Lower leg skin (tissue), 4 donors: ENCODE measurements at regions of chr20 and their contacts with region 1.

Region 1: DNA sequence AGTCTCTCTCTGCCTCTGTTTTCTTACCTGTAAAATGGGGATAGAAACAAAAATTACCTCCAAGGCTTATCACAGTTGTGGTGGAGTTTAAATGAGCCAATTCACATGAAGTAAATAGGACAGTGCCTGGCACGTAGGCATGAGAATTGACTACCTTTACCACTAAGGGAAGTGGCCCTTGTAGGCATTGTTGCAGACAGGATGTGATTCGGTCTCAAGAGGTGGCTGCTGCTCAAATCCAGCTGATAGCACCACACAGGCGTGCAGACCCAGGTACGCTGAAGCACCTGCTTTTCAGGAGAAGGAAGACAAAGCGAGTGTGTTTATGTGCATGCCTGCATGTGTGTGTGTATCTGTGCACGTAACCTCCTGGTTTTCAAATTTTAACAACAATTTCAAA is 108.6 kb downstream of the EYA2 start:
- DNase-seq: no peak
- H3K4me3 ChIP-seq: no peak overlapping the region
- CTCF ChIP-seq: no peak
- POLR2A ChIP-seq: no peak

Region 2: DNA sequence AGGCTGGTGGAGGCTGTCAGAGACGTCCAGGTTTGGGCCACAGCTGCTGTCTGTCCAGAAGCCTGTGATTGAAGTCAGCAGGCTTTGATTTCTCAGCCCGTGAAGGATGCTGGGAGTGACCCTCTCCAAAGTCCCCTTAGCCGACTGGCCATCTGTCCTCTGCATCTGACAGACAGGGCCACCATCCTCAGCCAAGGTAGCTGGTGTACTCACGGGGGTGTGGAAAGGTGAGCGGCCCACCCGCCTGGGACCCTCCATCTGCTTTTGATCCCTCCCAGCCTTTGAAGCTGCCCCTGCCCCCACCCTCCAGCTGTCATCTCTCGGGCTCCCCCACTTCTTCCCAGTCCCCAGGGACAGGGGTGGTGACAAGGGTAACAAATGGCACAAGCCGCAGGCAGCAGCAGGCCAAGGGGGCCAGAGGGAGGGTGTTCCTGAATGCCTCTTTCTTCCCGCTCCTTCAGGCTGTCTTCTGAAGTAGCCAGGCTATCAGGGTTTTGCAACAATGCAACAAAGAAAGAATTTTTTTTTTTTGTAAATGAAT is 24.2 kb before region 1 on chr20:
- intact Hi-C with region 1: loop called (anchors 1 kb)
- DNase-seq: peak in 1 of 2 donors; percentile 70
- H3K4me3 ChIP-seq: no peak overlapping the region
- CTCF ChIP-seq: no peak
- POLR2A ChIP-seq: no peak